ENCODE measurements at regions of chr18 and their contacts with region 1.

Region 1: GRCh38 chr18:51070545-51070944 is 40.5 kb downstream of the SMAD4 start:
- DNase-seq: no peak
- H3K4me3 Mint-ChIP-seq: no peak overlapping the region
- H3K27ac Mint-ChIP-seq: no peak overlapping the region
- H3K4me1 Mint-ChIP-seq: peaks cover 36% of the 10 kb centered on the region
- H3K27me3 Mint-ChIP-seq: no peaks in the 10 kb centered on the region

Region 2: DNA sequence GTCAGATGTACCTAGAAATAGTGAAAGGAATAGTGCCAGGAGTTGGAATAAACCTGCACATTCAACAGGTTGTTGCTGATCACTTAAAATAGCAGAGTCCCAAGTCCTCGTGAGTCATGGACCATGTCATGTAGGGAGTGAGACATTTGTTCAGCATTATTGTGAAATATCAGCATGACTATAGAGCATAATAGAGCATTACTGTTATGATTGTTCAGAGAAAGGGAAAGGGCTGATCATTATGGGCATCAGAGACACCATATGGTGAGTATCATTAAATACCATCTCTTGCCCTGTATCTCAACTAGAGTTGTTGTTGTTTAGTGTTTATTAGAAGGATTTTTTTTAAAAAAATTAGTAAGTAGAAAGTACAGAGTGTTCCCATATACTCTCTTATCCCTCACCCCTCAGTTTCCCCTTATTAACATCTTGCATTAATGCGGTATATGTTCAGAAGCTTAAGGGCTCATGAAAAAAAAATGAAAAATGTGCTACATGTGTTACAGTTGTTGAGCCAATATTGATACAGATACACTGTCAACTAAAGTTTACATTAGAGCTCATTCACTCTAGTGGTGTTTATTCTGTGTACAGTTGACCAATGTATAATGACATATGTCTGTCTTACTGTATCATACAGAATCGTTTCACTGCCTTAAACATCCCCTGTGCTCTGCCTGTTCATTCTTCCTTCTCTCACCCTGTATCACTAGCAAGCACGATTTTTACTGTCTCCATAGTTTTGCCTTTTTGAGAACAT is 97.0 kb before region 1 on chr18:
- CTCF ChIA-PET with region 1: no interaction called
- POLR2A ChIA-PET with region 1: no interaction called
- intact Hi-C with region 1: loop called (anchors 1 kb)
- DNase-seq: peak; percentile 23
- H3K4me3 Mint-ChIP-seq: no peak overlapping the region
- H3K27ac Mint-ChIP-seq: peak overlapping the region; percentile 75
- H3K4me1 Mint-ChIP-seq: peaks cover 34% of the 10 kb centered on the region
- H3K27me3 Mint-ChIP-seq: no peaks in the 10 kb centered on the region

Region 3: DNA sequence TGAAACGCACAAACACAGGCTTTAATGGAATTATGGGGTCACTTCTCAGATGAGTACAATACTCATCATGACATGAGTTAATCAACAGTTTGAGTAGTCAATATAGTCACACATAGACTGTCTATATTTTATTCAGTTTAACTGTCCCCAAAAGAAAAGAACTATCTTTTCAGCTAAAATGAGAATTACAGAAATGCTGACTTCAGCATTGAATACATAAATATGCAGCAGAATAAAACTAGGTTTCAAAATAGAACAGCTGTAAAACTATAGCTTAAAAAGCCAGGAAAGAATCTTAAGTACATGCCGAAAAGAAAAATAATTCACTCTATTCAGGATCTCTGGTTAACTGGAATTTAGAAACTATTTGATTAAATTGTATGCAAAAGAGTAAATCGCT is 10.6 kb before region 1 on chr18:
- CTCF ChIA-PET with region 1: no interaction called
- POLR2A ChIA-PET with region 1: no interaction called
- intact Hi-C with region 1: no loop called
- DNase-seq: no peak
- H3K4me3 Mint-ChIP-seq: no peak overlapping the region
- H3K27ac Mint-ChIP-seq: no peak overlapping the region
- H3K4me1 Mint-ChIP-seq: peaks cover 13% of the 10 kb centered on the region
- H3K27me3 Mint-ChIP-seq: no peaks in the 10 kb centered on the region

Region 4: GRCh38 chr18:51092117-51092516 is 21.6 kb after region 1 on chr18:
- CTCF ChIA-PET with region 1: no interaction called
- POLR2A ChIA-PET with region 1: no interaction called
- intact Hi-C with region 1: no loop called
- DNase-seq: no peak
- H3K4me3 Mint-ChIP-seq: no peak overlapping the region
- H3K27ac Mint-ChIP-seq: no peak overlapping the region
- H3K4me1 Mint-ChIP-seq: no peaks in the 10 kb centered on the region
- H3K27me3 Mint-ChIP-seq: no peaks in the 10 kb centered on the region